ENCODE measurements at regions of chr6 and their contacts with region 1.

Region 1: DNA sequence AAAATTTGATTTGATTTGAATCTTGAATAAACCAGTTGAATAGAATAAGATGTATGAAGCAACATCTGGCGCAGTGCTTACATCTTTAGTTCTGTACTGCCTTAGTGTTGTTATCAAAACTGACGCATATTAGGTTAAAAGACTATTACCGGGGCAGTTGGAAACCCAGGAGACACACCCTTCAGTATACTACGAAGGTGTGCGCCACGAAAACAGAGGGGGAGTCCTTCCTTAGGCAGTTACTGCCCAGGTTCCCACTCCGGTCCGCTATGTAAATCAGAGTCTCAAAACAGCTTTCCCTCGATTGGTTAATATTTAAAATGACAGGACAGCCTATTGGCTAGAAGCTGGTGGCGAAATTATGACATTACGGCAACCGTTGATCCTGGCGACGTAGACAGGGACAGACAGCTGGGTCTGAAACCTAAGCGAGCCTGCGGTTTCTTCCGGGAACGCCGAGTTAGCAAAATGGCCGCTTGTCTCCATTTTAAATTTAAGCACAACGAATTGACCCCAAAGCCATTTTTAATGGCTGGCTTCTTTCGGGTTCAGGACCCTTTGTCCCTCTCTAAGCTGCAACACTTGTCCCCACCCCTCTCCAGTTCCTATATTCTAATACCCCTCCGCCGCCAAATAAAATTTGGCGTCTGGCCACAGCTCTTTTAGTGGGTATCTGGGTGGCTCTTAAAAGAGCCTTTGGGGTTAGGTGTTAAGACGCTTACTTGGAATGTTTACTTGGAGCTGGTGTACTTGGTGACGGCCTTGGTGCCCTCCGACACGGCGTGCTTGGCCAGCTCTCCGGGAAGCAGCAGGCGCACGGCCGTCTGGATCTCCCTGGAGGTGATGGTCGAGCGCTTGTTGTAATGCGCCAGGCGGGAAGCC is 35.8 kb downstream of the HFE start:
- DNase-seq: peak; percentile 95
- H3K4me3 Mint-ChIP-seq: peak overlapping the region; percentile 97
- H3K27ac Mint-ChIP-seq: peak overlapping the region; percentile 100
- H3K4me1 Mint-ChIP-seq: peaks cover 40% of the 10 kb centered on the region
- H3K27me3 Mint-ChIP-seq: no peaks in the 10 kb centered on the region

Region 2: GRCh38 chr6:26017632-26017966 is 105.4 kb before region 1 on chr6:
- CTCF ChIA-PET with region 1: no interaction called
- POLR2A ChIA-PET with region 1: interaction called, 87 read pairs
- DNase-seq: peak; percentile 86
- H3K4me3 Mint-ChIP-seq: peak overlapping the region; percentile 74
- H3K27ac Mint-ChIP-seq: peak overlapping the region; percentile 96
- H3K4me1 Mint-ChIP-seq: peaks cover 39% of the 10 kb centered on the region
- H3K27me3 Mint-ChIP-seq: no peaks in the 10 kb centered on the region

Region 3: GRCh38 chr6:26065952-26066380 is 57.1 kb before region 1 on chr6:
- CTCF ChIA-PET with region 1: interaction called, 7 read pairs
- POLR2A ChIA-PET with region 1: interaction called, 93 read pairs
- DNase-seq: peak; percentile 64
- H3K4me3 Mint-ChIP-seq: no peak overlapping the region
- H3K27ac Mint-ChIP-seq: no peak overlapping the region
- H3K4me1 Mint-ChIP-seq: peaks cover 9% of the 10 kb centered on the region
- H3K27me3 Mint-ChIP-seq: peaks cover 29% of the 10 kb centered on the region

Region 4: DNA sequence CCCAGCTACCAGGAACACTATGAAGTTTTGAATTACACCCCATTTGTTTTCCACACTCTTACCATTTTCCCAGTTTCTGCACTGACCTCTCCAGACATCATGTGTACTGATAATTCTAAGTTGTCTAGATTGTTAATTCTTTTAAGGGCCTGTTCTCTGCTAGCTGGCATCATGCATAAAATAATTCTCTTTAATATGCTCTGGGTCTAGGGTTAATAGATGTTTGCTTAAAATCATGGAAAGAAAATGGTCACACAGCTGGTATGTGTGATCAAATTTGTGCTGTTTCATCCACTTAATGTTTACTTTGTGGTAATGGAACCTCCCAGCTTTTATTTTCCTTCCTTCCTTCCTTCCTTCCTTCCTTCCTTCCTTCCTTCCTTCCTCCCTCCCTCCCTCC is 13.3 kb after region 1 on chr6:
- CTCF ChIA-PET with region 1: interaction called, 4 read pairs
- POLR2A ChIA-PET with region 1: interaction called, 47 read pairs
- DNase-seq: no peak
- H3K4me3 Mint-ChIP-seq: no peak overlapping the region
- H3K27ac Mint-ChIP-seq: no peak overlapping the region
- H3K4me1 Mint-ChIP-seq: peaks cover 21% of the 10 kb centered on the region
- H3K27me3 Mint-ChIP-seq: no peaks in the 10 kb centered on the region

Region 5: GRCh38 chr6:26175428-26176181 is 52.6 kb after region 1 on chr6:
- CTCF ChIA-PET with region 1: interaction called, 4 read pairs
- POLR2A ChIA-PET with region 1: interaction called, 270 read pairs
- DNase-seq: peak; percentile 68
- H3K4me3 Mint-ChIP-seq: peak overlapping the region; percentile 5
- H3K27ac Mint-ChIP-seq: peak overlapping the region; percentile 50
- H3K4me1 Mint-ChIP-seq: peaks cover 44% of the 10 kb centered on the region
- H3K27me3 Mint-ChIP-seq: no peaks in the 10 kb centered on the region

Region 6: DNA sequence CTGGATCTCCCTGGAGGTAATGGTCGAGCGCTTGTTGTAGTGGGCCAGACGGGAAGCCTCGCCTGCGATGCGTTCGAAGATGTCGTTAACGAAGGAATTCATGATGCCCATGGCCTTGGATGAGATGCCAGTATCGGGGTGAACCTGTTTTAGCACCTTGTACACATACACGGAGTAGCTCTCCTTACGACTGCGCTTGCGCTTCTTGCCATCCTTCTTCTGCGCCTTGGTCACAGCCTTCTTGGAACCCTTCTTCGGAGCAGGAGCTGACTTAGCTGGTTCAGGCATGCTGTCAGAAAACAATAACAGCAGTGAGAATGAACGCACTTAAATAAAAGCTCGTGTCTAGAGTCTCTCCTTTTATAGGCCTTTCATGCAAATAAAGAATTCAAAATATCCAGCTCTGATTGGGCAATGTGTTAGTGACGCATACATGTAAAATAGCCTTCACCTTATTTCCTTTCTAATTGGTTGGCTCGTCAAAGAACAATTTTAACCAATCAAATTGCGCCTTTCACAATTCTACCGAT is 93.4 kb after region 1 on chr6:
- CTCF ChIA-PET with region 1: interaction called, 4 read pairs
- POLR2A ChIA-PET with region 1: interaction called, 150 read pairs
- DNase-seq: peak; percentile 90
- H3K4me3 Mint-ChIP-seq: no peak overlapping the region
- H3K27ac Mint-ChIP-seq: no peak overlapping the region
- H3K4me1 Mint-ChIP-seq: peaks cover 28% of the 10 kb centered on the region
- H3K27me3 Mint-ChIP-seq: no peaks in the 10 kb centered on the region

Region 7: DNA sequence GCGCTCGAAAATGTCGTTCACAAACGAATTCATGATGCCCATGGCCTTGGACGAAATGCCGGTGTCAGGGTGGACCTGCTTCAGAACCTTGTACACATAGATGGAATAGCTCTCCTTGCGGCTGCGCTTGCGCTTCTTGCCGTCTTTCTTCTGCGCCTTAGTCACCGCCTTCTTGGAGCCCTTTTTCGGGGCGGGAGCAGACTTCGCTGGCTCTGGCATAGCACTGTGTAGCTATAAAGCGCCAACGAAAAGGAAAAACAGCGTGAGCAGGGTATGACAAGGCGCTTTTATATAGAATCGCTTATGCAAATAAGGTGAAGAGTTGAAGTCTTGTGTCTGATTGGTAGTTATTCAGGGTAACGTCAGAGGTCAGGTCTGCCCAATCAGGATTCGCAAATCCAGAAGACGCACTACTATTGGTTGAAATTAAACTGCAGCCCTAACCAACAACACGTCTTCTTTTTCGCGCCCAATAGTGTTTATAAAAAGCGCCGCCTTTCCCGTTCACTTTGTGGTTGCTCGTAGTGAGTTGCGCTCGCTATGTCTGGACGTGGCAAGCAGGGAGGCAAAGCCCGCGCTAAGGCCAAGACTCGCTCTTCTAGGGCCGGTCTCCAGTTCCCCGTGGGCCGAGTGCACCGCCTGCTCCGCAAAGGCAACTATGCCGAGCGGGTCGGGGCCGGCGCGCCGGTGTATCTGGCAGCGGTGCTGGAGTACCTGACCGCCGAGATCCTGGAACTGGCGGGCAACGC is 1009.7 kb after region 1 on chr6:
- CTCF ChIA-PET with region 1: no interaction called
- POLR2A ChIA-PET with region 1: interaction called, 50 read pairs
- DNase-seq: peak; percentile 95
- H3K4me3 Mint-ChIP-seq: no peak overlapping the region
- H3K27ac Mint-ChIP-seq: no peak overlapping the region
- H3K4me1 Mint-ChIP-seq: peaks cover 60% of the 10 kb centered on the region
- H3K27me3 Mint-ChIP-seq: no peaks in the 10 kb centered on the region

Region 8: DNA sequence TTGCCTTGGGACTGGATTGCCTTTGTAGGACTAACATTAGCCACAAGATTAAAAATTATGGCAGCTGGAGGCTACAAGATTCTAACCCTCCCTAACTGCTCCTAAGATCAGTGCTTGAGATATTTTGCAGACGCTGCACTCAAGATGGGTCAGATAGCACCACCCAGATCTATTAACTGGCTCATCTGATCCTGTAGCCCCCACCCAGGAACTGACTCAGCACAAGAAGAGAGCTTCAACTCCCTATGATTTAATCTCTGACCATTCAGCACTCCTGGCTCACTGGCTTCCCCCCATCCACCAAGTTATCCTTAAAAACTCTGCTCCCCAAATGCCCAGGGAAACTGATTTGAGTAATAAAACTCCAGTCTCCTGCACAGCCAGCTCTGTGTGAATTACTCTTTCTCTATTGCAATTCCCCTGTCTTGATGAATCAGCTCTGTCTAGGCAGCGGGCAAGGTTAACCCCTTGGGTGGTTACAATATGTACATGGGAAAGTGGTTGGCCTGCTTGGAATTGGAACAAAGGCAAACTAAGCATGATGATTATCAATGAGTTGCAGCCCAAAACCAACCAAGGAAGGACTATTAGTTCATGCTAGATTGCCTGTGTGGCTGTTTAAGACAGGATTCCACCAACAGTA is 1677.8 kb after region 1 on chr6:
- CTCF ChIA-PET with region 1: no interaction called
- POLR2A ChIA-PET with region 1: no interaction called
- DNase-seq: no peak
- H3K4me3 Mint-ChIP-seq: no peak overlapping the region
- H3K27ac Mint-ChIP-seq: no peak overlapping the region
- H3K4me1 Mint-ChIP-seq: peaks cover 16% of the 10 kb centered on the region
- H3K27me3 Mint-ChIP-seq: peaks cover 11% of the 10 kb centered on the region